Heart left ventricle (tissue), 16 donors: ENCODE measurements at regions of chr17 and their contacts with region 1.

Region 1: GRCh38 chr17:50547035-50547735 is at the start of gene SPATA20:
- DNase-seq: peak; percentile 91 to 96 (median 94)
- ATAC-seq: peak; percentile 86 to 91 (median 88)
- H3K4me3 ChIP-seq: peak within 1 kb of the TSS; percentile 34 to 87 (median 64)
- H3K27ac ChIP-seq: peak within 1 kb of the TSS in 11 of 12 donors; percentile 74 to 94 (median 85)
- H3K4me1 ChIP-seq: peaks cover 0 to 39% (median 22%) of the 10 kb centered on the region in 12 donors
- H3K27me3 ChIP-seq: peaks cover 0 to 2% (median 0%) of the 10 kb centered on the region in 9 donors
- CTCF ChIP-seq: peak; percentile 92 to 100 (median 97)
- POLR2A ChIP-seq: peak in 1 of 2 donors; percentile 89
- total RNA-seq, gene SPATA20: 21.6 to 83.0 (median 67.1) TPM

Region 2: GRCh38 chr17:50064258-50065001 is 482.8 kb before region 1 on chr17:
- intact Hi-C with region 1: no loop called
- DNase-seq: peak in 3 of 5 donors; percentile 54 to 79 (median 78)
- ATAC-seq: peak in 3 of 4 donors; percentile 1 to 13 (median 3)
- H3K4me3 ChIP-seq: no peak overlapping the region
- H3K27ac ChIP-seq: peak overlapping the region; percentile 45 to 97 (median 89)
- H3K4me1 ChIP-seq: peaks cover 0 to 84% (median 64%) of the 10 kb centered on the region in 12 donors
- H3K27me3 ChIP-seq: no peaks in the 10 kb centered on the region
- CTCF ChIP-seq: no peak
- POLR2A ChIP-seq: no peak

Region 3: GRCh38 chr17:50478391-50479381 is 68.5 kb before region 1 on chr17 and contains the start of gene RSAD1:
- intact Hi-C with region 1: loop called in 7 of 10 experiments (anchors 2 to 5 kb)
- DNase-seq: peak; percentile 88 to 94 (median 89)
- ATAC-seq: peak; percentile 61 to 93 (median 83)
- H3K4me3 ChIP-seq: peak within 1 kb of the TSS; percentile 47 to 96 (median 83)
- H3K27ac ChIP-seq: peak within 1 kb of the TSS; percentile 2 to 93 (median 86)
- H3K4me1 ChIP-seq: peaks cover 0 to 51% (median 32%) of the 10 kb centered on the region in 12 donors
- H3K27me3 ChIP-seq: no peaks in the 10 kb centered on the region
- CTCF ChIP-seq: peak; percentile 80 to 98 (median 96)
- POLR2A ChIP-seq: peak in 1 of 2 donors; percentile 92
- total RNA-seq, gene RSAD1: 30.9 to 50.0 (median 42.8) TPM

Region 4: DNA sequence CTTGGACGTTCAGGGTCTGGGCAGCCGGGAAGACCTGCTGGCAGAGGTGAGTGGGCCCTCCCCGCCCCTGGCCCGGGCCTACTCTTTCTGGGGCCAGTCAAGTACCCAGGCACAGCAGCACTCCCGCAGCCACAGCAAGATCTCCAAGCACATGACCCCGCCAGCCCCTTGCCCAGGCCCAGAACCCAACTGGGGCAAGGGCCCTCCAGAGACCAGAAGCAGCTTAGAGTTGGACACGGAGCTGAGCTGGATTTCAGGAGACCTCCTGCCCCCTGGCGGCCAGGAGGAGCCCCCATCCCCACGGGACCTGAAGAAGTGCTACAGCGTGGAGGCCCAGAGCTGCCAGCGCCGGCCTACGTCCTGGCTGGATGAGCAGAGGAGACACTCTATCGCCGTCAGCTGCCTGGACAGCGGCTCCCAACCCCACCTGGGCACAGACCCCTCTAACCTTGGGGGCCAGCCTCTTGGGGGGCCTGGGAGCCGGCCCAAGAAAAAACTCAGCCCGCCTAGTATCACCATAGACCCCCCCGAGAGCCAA is 78.9 kb after region 1 on chr17:
- intact Hi-C with region 1: loop called in 9 of 10 experiments (anchors 1 to 2 kb)
- DNase-seq: peak; percentile 71 to 82 (median 77)
- ATAC-seq: peak; percentile 48 to 86 (median 82)
- H3K4me3 ChIP-seq: no peak overlapping the region
- H3K27ac ChIP-seq: no peak overlapping the region
- H3K4me1 ChIP-seq: peaks cover 0 to 19% (median 4%) of the 10 kb centered on the region in 12 donors
- H3K27me3 ChIP-seq: peaks cover 0 to 39% (median 9%) of the 10 kb centered on the region in 9 donors
- CTCF ChIP-seq: peak; percentile 74 to 88 (median 80)
- POLR2A ChIP-seq: no peak

Region 5: DNA sequence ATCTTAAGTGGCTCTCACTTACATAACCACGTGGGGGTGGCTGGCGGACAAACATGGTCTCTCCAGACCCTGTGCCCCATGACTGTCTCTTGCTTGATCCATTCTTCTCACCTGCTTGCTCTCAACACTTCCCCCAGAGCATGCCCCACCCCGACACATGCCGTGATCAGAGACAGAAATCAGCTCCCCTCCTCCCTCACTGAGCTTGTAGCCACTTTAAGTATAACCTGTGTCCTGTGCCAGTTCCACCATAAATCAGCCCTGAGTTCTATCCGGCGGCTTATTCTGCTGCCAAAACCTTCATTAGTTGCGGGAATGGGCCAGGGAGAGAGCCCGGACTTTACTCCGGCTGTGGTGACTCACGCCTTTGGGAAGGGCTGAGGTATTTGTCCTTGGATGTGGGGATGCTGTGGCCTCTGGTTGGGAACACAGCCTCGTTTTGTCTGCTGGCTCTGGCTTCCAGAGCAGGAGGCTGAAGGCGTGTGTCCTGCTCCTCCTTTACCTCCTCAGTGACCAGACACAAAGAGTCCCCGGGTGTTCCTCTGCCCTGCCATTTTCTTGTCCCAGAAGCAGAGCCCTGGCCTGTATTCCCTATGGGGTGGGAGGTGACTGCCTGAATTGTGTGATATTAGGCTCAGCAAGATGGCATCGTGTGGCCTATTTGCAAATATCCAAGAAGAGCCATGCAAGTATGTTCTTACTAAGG is 139.5 kb after region 1 on chr17:
- intact Hi-C with region 1: loop called in 8 of 10 experiments (anchors 1 to 5 kb)
- DNase-seq: peak in 3 of 5 donors; percentile 43 to 82 (median 63)
- ATAC-seq: peak; percentile 76 to 88 (median 82)
- H3K4me3 ChIP-seq: no peak overlapping the region
- H3K27ac ChIP-seq: peak overlapping the region in 8 of 12 donors; percentile 2 to 82 (median 46)
- H3K4me1 ChIP-seq: peaks cover 0 to 23% (median 11%) of the 10 kb centered on the region in 12 donors
- H3K27me3 ChIP-seq: no peaks in the 10 kb centered on the region
- CTCF ChIP-seq: no peak
- POLR2A ChIP-seq: no peak

Region 6: DNA sequence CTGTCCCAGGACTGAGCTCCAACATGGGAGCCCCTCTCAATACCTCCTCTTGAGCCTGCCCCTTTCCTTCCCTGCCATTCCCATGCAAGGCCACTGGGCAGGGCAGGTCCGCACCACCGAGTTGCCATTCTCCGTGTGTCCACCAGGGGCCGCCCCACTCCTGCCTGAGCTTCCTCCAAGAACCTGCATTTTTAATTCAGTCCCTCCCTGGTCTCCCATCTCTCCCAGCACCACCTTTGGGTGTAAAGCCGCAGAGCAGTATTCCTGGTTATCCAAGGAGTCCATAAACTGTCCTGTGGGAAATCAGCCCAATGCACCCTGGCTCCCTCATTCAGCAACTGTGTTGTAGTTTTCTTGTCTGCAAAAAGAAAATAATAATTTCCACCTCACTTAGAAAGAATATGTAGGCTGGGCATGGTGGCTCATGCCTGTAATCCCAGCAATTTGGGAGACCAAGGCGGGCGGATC is 236.0 kb after region 1 on chr17:
- intact Hi-C with region 1: loop called in 1 of 10 experiments (anchors 5 kb)
- DNase-seq: peak; percentile 81 to 91 (median 84)
- ATAC-seq: peak; percentile 66 to 89 (median 86)
- H3K4me3 ChIP-seq: no peak overlapping the region
- H3K27ac ChIP-seq: no peak overlapping the region
- H3K4me1 ChIP-seq: peaks cover 0 to 19% (median 3%) of the 10 kb centered on the region in 12 donors
- H3K27me3 ChIP-seq: no peaks in the 10 kb centered on the region
- CTCF ChIP-seq: peak; percentile 93 to 99 (median 94)
- POLR2A ChIP-seq: no peak

Region 7: DNA sequence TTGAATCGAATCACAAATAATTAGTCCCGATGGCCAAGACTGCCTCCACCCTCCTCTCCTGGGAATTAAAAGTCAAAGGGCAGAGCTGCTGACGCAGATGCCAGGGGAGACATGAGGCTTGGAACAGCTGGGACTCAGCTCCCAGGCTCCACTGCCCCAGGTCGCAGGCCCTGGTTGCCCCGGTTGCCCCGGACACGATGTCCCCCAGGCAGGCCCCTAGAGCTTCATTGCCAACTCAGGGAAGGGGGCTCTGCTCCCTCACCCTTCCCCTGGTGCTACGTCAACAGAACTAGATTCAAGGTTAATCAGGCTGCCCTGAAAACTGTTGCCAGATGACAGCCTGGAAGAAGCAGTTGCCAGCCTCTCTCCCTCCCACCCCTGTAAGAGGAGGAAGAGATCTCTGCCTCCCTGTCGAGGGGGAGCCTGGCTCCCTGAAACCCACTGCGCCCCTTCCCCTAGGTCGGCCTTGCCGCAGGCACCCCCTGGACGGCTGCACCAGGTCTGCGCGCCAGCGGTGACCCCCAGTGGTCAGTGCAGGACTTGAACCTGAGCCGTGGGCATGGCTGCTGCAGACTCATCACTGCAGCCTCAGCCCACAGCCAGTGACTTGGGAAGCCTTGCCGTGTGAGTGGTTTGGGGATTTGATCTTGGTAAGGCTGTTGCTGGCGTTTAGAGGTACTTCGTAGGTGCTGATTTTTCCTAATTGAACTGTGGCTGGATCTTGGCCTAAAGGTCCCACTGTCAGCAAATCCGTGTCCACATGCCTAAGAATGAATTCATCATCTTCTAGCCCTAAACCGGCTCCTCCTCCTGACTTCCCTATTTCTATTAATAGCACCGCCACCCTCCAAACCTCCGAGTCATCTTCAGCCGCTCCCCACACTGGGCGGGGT is 403.1 kb after region 1 on chr17:
- intact Hi-C with region 1: loop called in 4 of 10 experiments (anchors 5 to 10 kb)
- DNase-seq: peak; percentile 77 to 90 (median 86)
- ATAC-seq: peak; percentile 78 to 88 (median 86)
- H3K4me3 ChIP-seq: peak overlapping the region in 3 of 12 donors; percentile 0 to 16 (median 2)
- H3K27ac ChIP-seq: peak overlapping the region; percentile 71 to 91 (median 82)
- H3K4me1 ChIP-seq: peaks cover 0 to 67% (median 46%) of the 10 kb centered on the region in 12 donors
- H3K27me3 ChIP-seq: no peaks in the 10 kb centered on the region
- CTCF ChIP-seq: peak; percentile 62 to 87 (median 81)
- POLR2A ChIP-seq: no peak